Activated CD8-positive, alpha-beta T cell treated with anti-CD3 and anti-CD28 coated beads for 36 hours (primary cell): ENCODE measurements at regions of chr7 and their contacts with region 1.

Region 1: GRCh38 chr7:6317797-6318438 is 45.5 kb upstream of the CYTH3 start:
- DNase-seq: peak; percentile 65
- ATAC-seq: peak; percentile 93
- H3K4me3 Mint-ChIP-seq: peak overlapping the region; percentile 19
- H3K27ac Mint-ChIP-seq: peak overlapping the region; percentile 26
- H3K4me1 Mint-ChIP-seq: peaks cover 8% of the 10 kb centered on the region
- H3K27me3 Mint-ChIP-seq: no peaks in the 10 kb centered on the region
- CTCF ChIP-seq: no peak

Region 2: GRCh38 chr7:6121141-6121540 is 196.8 kb before region 1 on chr7:
- CTCF ChIA-PET with region 1: interaction called, 12 read pairs
- POLR2A ChIA-PET with region 1: no interaction called
- intact Hi-C with region 1: no loop called
- DNase-seq: no peak
- ATAC-seq: no peak
- H3K4me3 Mint-ChIP-seq: no peak overlapping the region
- H3K27ac Mint-ChIP-seq: no peak overlapping the region
- H3K4me1 Mint-ChIP-seq: peaks cover 15% of the 10 kb centered on the region
- H3K27me3 Mint-ChIP-seq: no peaks in the 10 kb centered on the region
- CTCF ChIP-seq: no peak

Region 3: DNA sequence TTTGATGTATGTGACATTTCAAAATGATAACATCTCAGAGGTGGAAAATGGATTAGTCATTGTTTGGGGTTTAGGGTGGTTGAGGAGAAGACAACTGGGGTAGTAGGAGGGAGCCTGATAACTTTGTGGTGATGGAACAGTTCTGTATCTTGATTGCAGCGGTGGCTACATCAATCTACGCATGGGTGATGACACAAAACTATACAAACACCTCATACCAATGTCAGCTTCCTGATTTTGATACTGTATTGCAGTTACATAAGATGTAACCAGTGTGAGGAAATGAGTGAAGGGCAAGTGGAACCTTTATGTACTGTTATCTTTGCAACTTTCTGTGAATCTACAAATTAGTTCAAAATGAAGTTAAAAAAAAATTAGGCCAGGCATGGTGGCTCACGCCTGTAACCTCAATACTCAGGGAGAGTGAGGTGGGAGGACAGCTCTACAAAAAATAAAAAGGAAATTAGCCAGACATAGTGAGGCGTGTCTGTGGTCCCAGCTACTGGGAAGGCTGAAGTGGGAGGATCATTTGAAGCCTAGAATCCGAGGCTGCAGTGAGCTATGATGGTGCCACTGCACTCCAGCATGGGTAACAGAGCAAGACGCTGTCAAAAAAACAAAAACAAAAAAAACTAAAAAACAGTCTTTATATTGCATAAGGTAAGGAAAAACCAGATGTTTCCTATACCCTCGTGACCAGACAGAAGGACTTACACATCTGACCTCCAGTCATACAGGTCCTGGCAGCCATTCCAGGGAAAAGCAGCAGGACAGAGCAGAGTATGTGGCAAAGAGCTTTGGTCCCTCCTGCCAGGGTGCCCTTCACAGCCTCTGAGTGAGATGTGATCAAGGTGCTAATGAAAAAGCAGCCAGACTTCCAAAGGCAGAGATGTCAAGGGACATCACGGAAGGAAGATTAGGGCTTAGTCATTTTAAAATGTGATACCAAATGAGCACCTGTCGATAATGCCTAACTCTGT is 96.3 kb before region 1 on chr7:
- CTCF ChIA-PET with region 1: no interaction called
- POLR2A ChIA-PET with region 1: no interaction called
- intact Hi-C with region 1: no loop called
- DNase-seq: peak; percentile 65
- ATAC-seq: peak; percentile 98
- H3K4me3 Mint-ChIP-seq: no peak overlapping the region
- H3K27ac Mint-ChIP-seq: peak overlapping the region; percentile 65
- H3K4me1 Mint-ChIP-seq: peaks cover 17% of the 10 kb centered on the region
- H3K27me3 Mint-ChIP-seq: peaks cover 5% of the 10 kb centered on the region
- CTCF ChIP-seq: no peak

Region 4: GRCh38 chr7:6294839-6295238 is 23.1 kb before region 1 on chr7:
- CTCF ChIA-PET with region 1: no interaction called
- POLR2A ChIA-PET with region 1: no interaction called
- intact Hi-C with region 1: no loop called
- DNase-seq: no peak
- ATAC-seq: no peak
- H3K4me3 Mint-ChIP-seq: no peak overlapping the region
- H3K27ac Mint-ChIP-seq: no peak overlapping the region
- H3K4me1 Mint-ChIP-seq: peaks cover 3% of the 10 kb centered on the region
- H3K27me3 Mint-ChIP-seq: no peaks in the 10 kb centered on the region
- CTCF ChIP-seq: no peak

Region 5: DNA sequence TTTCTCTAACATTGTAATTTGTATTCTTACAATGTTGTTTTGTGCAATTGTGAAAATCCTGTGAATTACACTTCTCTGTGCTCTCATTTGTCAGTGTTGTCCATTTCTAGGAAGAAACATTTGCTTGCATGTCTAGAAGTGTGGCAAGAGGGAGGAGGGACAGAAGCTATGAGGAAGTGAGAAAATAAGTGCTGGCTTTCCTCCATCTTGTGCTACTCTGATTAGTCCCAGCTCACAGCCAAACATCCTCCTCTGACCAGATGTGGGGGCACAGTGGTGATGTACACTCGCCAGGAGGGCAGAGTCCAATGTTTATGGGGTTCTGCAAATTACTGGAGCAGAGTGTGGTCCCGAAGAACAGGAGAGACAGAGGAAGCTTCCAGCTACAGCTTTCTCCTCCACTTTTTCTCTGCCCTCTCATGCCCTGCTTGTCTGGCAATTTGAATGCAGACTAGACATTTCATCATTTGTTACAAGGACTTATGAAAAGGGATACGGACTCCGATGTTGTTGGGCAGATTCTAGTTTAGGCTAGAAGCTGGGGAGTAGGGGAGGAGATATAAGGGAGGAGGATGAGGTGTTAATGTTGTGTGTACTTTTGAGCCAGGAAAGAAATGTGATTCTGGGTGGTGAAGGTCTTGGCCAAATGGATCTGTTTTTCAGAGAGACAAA is 733.4 kb after region 1 on chr7:
- CTCF ChIA-PET with region 1: no interaction called
- POLR2A ChIA-PET with region 1: no interaction called
- intact Hi-C with region 1: no loop called
- DNase-seq: no peak
- ATAC-seq: no peak
- H3K4me3 Mint-ChIP-seq: no peak overlapping the region
- H3K27ac Mint-ChIP-seq: no peak overlapping the region
- H3K4me1 Mint-ChIP-seq: no peaks in the 10 kb centered on the region
- H3K27me3 Mint-ChIP-seq: no peaks in the 10 kb centered on the region
- CTCF ChIP-seq: no peak